Caco-2 (cell line): ENCODE measurements at regions of chr3 and their contacts with region 1.

Region 1: GRCh38 chr3:178569826-178570225 is 33.6 kb downstream of the KCNMB2 start:
- DNase-seq: no peak
- H3K4me3 ChIP-seq: no peak overlapping the region
- H3K4me3 Mint-ChIP-seq: no peak overlapping the region
- H3K27ac Mint-ChIP-seq: no peak overlapping the region
- H3K4me1 ChIP-seq: no peaks in the 10 kb centered on the region; the same call in 1 of the 2 replicates
- H3K4me1 Mint-ChIP-seq: peaks cover 10% of the 10 kb centered on the region
- H3K27me3 ChIP-seq: no peaks in the 10 kb centered on the region
- H3K27me3 Mint-ChIP-seq: no peaks in the 10 kb centered on the region
- CTCF ChIP-seq: no peak

Region 2: GRCh38 chr3:178606129-178606528 is 36.3 kb after region 1 on chr3:
- CTCF ChIA-PET with region 1: no interaction called
- POLR2A ChIA-PET with region 1: no interaction called
- intact Hi-C with region 1: no loop called
- DNase-seq: peak in 1 of 2 experiments; percentile 6
- H3K4me3 ChIP-seq: no peak overlapping the region
- H3K4me3 Mint-ChIP-seq: no peak overlapping the region
- H3K27ac Mint-ChIP-seq: no peak overlapping the region
- H3K4me1 ChIP-seq: peaks cover 3% of the 10 kb centered on the region; the same call in 1 of the 2 replicates
- H3K4me1 Mint-ChIP-seq: peaks cover 22% of the 10 kb centered on the region
- H3K27me3 ChIP-seq: no peaks in the 10 kb centered on the region
- H3K27me3 Mint-ChIP-seq: no peaks in the 10 kb centered on the region
- CTCF ChIP-seq: no peak

Region 3: DNA sequence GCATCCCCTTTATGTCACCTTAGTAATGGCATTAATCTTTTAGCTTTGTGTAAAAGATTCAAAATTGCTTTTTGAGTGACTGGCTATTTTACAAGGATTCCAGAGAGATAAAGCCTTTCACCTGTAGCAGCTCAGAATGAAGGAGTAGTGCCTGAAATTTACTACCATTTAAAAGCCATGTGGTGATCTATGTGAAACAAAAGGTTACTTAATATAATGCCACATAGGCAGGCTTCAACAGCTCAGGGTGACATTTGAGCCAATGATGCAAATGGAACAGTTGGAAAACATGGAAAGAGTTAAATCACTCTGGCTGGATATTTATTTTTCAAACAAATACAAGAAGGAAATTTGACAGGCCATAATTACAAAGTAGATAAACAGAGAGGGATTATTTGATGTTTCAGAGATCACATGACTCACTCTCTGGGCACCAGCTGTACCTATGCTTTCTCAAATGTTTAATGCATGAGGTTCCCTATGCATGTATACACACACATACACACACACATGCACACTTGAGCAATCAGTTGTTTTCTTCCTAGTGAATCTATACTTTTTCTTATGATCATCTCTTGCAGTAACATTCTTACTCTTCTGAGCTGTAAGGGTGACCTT is 330.3 kb after region 1 on chr3:
- CTCF ChIA-PET with region 1: interaction called, 11 read pairs
- POLR2A ChIA-PET with region 1: no interaction called
- intact Hi-C with region 1: no loop called
- DNase-seq: peak in 1 of 2 experiments; percentile 10
- H3K4me3 ChIP-seq: no peak overlapping the region
- H3K4me3 Mint-ChIP-seq: no peak overlapping the region
- H3K27ac Mint-ChIP-seq: no peak overlapping the region
- H3K4me1 ChIP-seq: peaks cover 10% of the 10 kb centered on the region; the same call in 1 of the 2 replicates
- H3K4me1 Mint-ChIP-seq: peaks cover 9% of the 10 kb centered on the region
- H3K27me3 ChIP-seq: no peaks in the 10 kb centered on the region
- H3K27me3 Mint-ChIP-seq: no peaks in the 10 kb centered on the region
- CTCF ChIP-seq: no peak